Naive thymus-derived CD8-positive, alpha-beta T cell (primary cell): ENCODE measurements at regions of chr7 and their contacts with region 1.

Region 1: GRCh38 chr7:620052-620451 is 100.4 kb upstream of the PDGFA start:
- DNase-seq: peak in 1 of 10 donors; percentile 15
- ATAC-seq: no peak
- H3K4me3 Mint-ChIP-seq: peak overlapping the region in 8 of 10 donors; percentile 56 to 94 (median 70)
- H3K27ac Mint-ChIP-seq: peak overlapping the region; percentile 98 to 100 (median 100)
- H3K4me1 Mint-ChIP-seq: peaks cover 35 to 74% (median 62%) of the 10 kb centered on the region in 4 donors
- H3K27me3 Mint-ChIP-seq: no peaks in the 10 kb centered on the region

Region 2: GRCh38 chr7:552868-553635 is 67.0 kb before region 1 on chr7:
- POLR2A ChIA-PET with region 1: no interaction called
- DNase-seq: peak in 1 of 10 donors; percentile 31
- ATAC-seq: no peak
- H3K4me3 Mint-ChIP-seq: no peak overlapping the region
- H3K27ac Mint-ChIP-seq: peak overlapping the region in 1 of 10 donors; percentile 76
- H3K4me1 Mint-ChIP-seq: no peaks in the 10 kb centered on the region
- H3K27me3 Mint-ChIP-seq: no peaks in the 10 kb centered on the region

Region 3: DNA sequence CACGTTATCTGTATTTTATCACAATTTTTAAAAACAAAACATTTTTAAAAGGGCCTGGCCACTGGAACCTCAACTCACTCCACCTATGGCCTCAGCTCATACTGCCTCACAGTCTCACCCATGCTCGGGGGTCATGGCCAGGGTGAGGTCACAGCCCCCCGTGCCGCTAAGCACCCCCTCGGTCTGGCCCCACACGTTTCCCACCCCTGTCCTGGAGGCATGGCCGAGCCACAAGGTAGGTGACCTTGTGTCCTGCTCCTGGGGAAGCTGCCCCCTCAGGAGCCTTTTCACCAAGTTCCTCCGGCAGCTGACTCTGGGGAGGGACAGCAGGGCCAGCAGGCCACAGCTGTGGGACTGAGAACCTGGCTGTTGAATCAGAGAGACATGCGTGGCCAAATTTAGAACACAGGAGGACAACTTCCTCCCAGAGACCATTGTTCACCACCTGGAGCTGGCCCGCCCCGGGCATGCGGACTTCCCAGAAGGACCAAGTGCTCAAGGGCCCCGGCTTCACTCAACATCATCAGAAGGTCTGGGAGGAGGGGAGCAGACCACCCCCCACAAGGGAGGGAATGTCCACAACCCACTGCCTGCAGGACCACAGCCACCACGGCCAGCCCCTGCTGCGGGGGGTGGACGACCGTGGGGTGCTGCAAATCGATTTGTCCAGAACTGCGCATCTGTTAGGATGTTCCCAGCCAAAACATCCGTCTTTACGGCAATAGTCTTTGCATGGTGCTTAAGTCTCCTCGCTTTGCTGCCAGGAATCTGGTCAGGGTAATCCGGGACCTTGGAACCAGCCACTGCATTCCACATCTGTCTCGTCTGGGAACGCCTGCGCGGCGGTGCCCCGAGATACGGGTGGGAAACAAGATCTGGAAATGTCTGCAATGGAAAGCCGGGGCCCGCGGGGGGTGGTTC is 51.8 kb before region 1 on chr7:
- POLR2A ChIA-PET with region 1: no interaction called
- DNase-seq: no peak
- ATAC-seq: no peak
- H3K4me3 Mint-ChIP-seq: no peak overlapping the region
- H3K27ac Mint-ChIP-seq: peak overlapping the region in 1 of 10 donors; percentile 40
- H3K4me1 Mint-ChIP-seq: peaks cover 0 to 5% (median 1%) of the 10 kb centered on the region in 4 donors
- H3K27me3 Mint-ChIP-seq: no peaks in the 10 kb centered on the region

Region 4: GRCh38 chr7:584122-584465 is 36.0 kb before region 1 on chr7:
- POLR2A ChIA-PET with region 1: interaction called, 26 read pairs
- DNase-seq: peak; percentile 77 to 95 (median 89)
- ATAC-seq: peak; percentile 98
- H3K4me3 Mint-ChIP-seq: peak overlapping the region; percentile 86 to 97 (median 93)
- H3K27ac Mint-ChIP-seq: peak overlapping the region; percentile 89 to 99 (median 97)
- H3K4me1 Mint-ChIP-seq: peaks cover 23 to 45% (median 29%) of the 10 kb centered on the region in 4 donors
- H3K27me3 Mint-ChIP-seq: no peaks in the 10 kb centered on the region

Region 5: GRCh38 chr7:604001-604883 is 15.8 kb before region 1 on chr7:
- POLR2A ChIA-PET with region 1: interaction called, 153 read pairs
- DNase-seq: peak; percentile 72 to 96 (median 90)
- ATAC-seq: peak; percentile 78 to 79
- H3K4me3 Mint-ChIP-seq: peak overlapping the region; percentile 84 to 97 (median 92)
- H3K27ac Mint-ChIP-seq: peak overlapping the region; percentile 100
- H3K4me1 Mint-ChIP-seq: peaks cover 28 to 73% (median 65%) of the 10 kb centered on the region in 4 donors
- H3K27me3 Mint-ChIP-seq: no peaks in the 10 kb centered on the region

Region 6: GRCh38 chr7:668139-668931 is 48.3 kb after region 1 on chr7:
- POLR2A ChIA-PET with region 1: interaction called, 10 read pairs
- DNase-seq: peak in 3 of 10 donors; percentile 21 to 37 (median 25)
- ATAC-seq: peak; percentile 66 to 70
- H3K4me3 Mint-ChIP-seq: no peak overlapping the region
- H3K27ac Mint-ChIP-seq: no peak overlapping the region
- H3K4me1 Mint-ChIP-seq: peaks cover 0 to 3% (median 1%) of the 10 kb centered on the region in 4 donors
- H3K27me3 Mint-ChIP-seq: no peaks in the 10 kb centered on the region

Region 7: DNA sequence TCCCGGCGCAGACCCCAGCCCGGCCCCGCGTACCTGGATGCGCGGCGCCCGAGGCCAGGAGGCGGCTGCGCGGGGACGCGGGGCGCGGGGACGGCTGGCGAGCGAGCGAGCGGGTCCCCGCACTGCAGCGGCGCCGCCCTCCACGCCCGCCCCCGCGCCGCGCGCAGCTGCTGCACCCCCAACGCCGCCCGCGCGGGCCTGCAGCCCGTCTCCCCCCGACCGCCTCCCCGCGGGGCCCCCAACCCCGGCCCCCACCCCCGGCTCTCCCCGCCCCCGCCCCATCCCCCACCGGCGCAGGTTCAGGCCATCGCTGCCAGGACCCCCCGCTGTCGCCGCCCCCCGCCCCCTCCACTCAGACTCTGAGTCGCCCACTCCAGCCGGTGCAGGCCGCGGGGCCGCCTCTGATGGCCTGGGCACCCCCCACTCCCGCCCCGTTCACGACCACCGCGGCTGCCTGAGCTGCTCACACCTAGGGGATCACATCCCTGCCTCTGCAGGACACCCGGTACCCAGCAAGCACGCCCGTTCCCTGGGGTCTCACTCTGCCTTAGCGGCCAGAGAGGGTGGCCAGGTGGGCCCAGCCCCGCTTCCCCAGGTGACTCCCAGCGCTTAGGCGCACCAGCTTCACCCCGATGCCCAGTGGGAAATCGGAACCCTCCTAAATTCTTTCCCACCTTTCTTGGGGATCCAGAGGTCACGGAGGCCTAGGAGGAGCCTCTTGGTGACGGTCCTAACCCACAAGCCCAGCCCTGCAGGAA is 92.5 kb after region 1 on chr7:
- POLR2A ChIA-PET with region 1: interaction called, 11 read pairs
- DNase-seq: peak in 6 of 10 donors; percentile 22 to 56 (median 40)
- ATAC-seq: peak; percentile 85 to 90
- H3K4me3 Mint-ChIP-seq: peak overlapping the region; percentile 32 to 88 (median 72)
- H3K27ac Mint-ChIP-seq: peak overlapping the region in 8 of 10 donors; percentile 19 to 91 (median 68)
- H3K4me1 Mint-ChIP-seq: peaks cover 8 to 46% (median 38%) of the 10 kb centered on the region in 4 donors
- H3K27me3 Mint-ChIP-seq: peaks cover 0 to 4% (median 0%) of the 10 kb centered on the region in 5 donors